ENCODE measurements at regions of chr15 and their contacts with region 1.

Region 1: GRCh38 chr15:55514414-55514850 is 6.4 kb upstream of the DNAAF4 start:
- DNase-seq: no peak
- ATAC-seq: no peak
- H3K4me3 Mint-ChIP-seq: no peak overlapping the region
- H3K27ac Mint-ChIP-seq: no peak overlapping the region
- H3K4me1 Mint-ChIP-seq: no peaks in the 10 kb centered on the region
- H3K27me3 Mint-ChIP-seq: peaks cover 9% of the 10 kb centered on the region

Region 2: DNA sequence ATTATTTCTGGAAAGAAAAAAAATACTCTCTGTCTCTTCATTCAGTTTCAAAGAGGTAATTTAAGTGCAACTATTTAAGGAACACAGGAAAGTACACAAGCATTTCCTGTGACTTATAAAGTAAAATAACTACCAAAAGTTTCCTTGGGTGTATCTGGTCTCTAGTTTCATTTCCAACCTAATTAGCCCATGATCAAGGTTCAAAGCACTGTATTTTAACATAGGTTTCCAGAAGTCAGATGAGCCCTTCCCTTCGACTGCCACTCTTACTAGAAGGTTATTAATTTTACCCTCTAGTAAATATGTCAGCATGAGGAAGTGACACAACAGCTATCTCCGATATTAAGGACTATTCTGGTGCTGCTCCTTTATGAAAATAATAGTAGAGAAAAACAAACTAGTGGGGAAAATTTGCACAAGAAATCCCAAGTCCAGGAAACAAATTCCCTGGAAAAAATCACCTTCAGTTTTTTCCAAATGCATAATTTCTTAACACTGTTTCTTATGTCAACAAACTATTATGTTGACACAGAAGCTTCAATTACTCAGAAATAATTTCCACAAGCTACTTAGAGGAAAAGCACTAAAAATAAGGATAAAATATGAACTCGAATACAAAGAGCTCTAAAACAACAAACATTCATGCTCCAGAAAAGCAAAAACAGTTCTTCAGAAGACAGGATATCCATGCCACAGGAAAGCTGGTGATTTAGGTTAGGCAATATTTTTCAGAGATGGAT is 141.6 kb before region 1 on chr15:
- CTCF ChIA-PET with region 1: no interaction called
- DNase-seq: no peak
- ATAC-seq: no peak
- H3K4me3 Mint-ChIP-seq: no peak overlapping the region
- H3K27ac Mint-ChIP-seq: peak overlapping the region; percentile 48
- H3K4me1 Mint-ChIP-seq: peaks cover 6% of the 10 kb centered on the region
- H3K27me3 Mint-ChIP-seq: no peaks in the 10 kb centered on the region

Region 3: DNA sequence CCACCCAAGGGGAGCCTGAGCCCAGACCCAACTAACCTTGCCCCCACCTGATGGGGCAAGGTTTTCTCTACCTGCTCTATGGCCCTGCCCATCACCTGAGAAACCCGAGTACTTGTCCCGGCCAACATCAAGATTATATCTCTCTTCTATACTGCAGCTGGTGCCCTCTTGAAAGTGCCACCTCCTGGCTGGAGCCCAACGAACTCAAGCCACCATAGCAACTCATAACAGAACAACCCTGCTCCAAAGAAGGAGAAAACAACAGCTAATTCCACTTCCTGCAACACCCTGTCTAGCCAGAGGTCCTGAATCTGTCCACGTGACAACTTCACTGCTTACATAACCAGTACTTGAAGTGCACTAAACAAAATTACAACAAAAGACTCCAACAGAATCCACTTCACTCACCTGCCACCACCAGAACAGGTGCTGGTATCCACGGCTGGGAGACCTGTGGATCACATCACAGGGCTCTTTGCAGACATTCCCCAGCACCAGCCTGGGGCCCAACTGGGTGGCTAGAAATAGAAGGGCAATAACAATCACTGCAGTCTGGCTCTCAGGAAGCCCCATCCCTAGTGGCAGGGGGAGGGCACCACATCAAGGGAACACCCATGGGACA is 56.9 kb before region 1 on chr15:
- CTCF ChIA-PET with region 1: no interaction called
- DNase-seq: no peak
- ATAC-seq: no peak
- H3K4me3 Mint-ChIP-seq: no peak overlapping the region
- H3K27ac Mint-ChIP-seq: no peak overlapping the region
- H3K4me1 Mint-ChIP-seq: no peaks in the 10 kb centered on the region
- H3K27me3 Mint-ChIP-seq: peaks cover 8% of the 10 kb centered on the region

Region 4: DNA sequence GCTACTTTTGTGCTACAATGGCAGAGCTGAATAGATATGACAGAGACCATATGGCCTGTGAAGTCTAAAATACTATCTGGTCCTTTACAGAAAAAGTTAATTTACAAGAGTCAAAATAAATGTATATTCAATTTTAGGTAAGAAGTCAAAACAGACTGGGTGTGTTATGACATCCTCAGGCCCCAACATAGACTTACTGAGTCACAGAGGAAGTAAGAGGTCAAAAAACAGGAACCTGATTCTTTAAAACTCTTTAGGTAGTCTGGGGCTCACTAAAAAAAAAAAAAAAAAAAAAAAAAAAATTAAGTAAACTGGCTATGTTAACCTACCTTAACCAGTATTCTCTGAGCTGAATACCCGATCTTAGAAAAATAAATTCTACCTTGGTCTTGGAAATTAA is 19.5 kb before region 1 on chr15:
- CTCF ChIA-PET with region 1: no interaction called
- DNase-seq: no peak
- ATAC-seq: no peak
- H3K4me3 Mint-ChIP-seq: no peak overlapping the region
- H3K27ac Mint-ChIP-seq: no peak overlapping the region
- H3K4me1 Mint-ChIP-seq: peaks cover 12% of the 10 kb centered on the region
- H3K27me3 Mint-ChIP-seq: no peaks in the 10 kb centered on the region

Region 5: GRCh38 chr15:55526559-55527036 is 12.2 kb after region 1 on chr15:
- CTCF ChIA-PET with region 1: interaction called, 10 read pairs
- DNase-seq: no peak
- ATAC-seq: peak; percentile 42
- H3K4me3 Mint-ChIP-seq: no peak overlapping the region
- H3K27ac Mint-ChIP-seq: no peak overlapping the region
- H3K4me1 Mint-ChIP-seq: peaks cover 3% of the 10 kb centered on the region
- H3K27me3 Mint-ChIP-seq: peaks cover 37% of the 10 kb centered on the region

Region 6: DNA sequence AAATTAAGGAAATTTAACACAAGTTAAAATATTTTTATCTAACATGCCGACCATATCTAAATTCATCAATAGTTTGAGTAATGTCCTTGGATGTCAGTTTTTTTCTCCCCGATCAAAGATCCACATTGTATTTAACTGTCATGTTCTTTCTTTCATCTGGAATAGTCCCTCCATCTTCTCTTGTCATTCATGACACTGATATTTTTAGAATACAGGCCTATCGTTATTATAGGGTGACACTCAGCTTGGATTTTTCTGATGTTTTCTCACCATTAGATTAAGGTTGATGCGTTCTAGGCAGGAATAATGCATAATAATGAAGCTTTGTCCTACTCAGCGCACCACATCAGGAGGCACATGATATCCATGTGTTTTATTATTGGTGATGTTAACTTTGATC is 86.9 kb after region 1 on chr15:
- CTCF ChIA-PET with region 1: no interaction called
- DNase-seq: no peak
- ATAC-seq: no peak
- H3K4me3 Mint-ChIP-seq: no peak overlapping the region
- H3K27ac Mint-ChIP-seq: no peak overlapping the region
- H3K4me1 Mint-ChIP-seq: no peaks in the 10 kb centered on the region
- H3K27me3 Mint-ChIP-seq: peaks cover 4% of the 10 kb centered on the region

Measured in activated CD8-positive, alpha-beta memory T cell treated with anti-CD3 and anti-CD28 coated beads, Interleukin-2, amount 10 ng/mL, durations not matched to agents 7 days and 5 days (primary cell).